Vagina (tissue), 2 donors: ENCODE measurements at regions of chr3 and their contacts with region 1.

Region 1: DNA sequence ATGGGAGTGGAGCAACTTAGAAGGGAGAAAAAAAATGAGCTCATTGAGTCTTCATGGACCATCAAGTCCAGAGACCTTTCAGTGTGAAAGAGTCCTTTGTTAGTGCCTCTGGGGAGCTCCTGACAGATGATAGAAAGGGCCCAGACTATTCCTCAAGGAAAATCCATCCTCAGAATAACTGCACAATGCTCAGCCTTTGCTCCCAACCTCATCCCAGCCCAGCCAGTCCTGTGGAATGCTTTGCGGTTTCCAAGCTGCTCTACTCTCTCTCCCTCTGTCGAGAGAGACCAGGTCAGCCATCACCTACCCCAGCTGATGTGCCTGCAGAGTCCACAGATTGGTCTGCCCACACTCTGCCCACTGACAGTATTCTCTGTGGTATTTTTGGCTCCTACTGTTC is 406.2 kb downstream of the MFSD1 start:
- DNase-seq: no peak
- H3K4me3 ChIP-seq: no peak overlapping the region
- H3K27ac ChIP-seq: no peak overlapping the region
- H3K4me1 ChIP-seq: no peaks in the 10 kb centered on the region
- H3K27me3 ChIP-seq: no peaks in the 10 kb centered on the region
- CTCF ChIP-seq: no peak
- POLR2A ChIP-seq: no peak

Region 2: GRCh38 chr3:159150180-159150579 is 57.9 kb before region 1 on chr3:
- intact Hi-C with region 1: no loop called
- DNase-seq: no peak
- H3K4me3 ChIP-seq: no peak overlapping the region
- H3K27ac ChIP-seq: no peak overlapping the region
- H3K4me1 ChIP-seq: no peaks in the 10 kb centered on the region
- H3K27me3 ChIP-seq: no peaks in the 10 kb centered on the region
- CTCF ChIP-seq: no peak
- POLR2A ChIP-seq: no peak

Region 3: DNA sequence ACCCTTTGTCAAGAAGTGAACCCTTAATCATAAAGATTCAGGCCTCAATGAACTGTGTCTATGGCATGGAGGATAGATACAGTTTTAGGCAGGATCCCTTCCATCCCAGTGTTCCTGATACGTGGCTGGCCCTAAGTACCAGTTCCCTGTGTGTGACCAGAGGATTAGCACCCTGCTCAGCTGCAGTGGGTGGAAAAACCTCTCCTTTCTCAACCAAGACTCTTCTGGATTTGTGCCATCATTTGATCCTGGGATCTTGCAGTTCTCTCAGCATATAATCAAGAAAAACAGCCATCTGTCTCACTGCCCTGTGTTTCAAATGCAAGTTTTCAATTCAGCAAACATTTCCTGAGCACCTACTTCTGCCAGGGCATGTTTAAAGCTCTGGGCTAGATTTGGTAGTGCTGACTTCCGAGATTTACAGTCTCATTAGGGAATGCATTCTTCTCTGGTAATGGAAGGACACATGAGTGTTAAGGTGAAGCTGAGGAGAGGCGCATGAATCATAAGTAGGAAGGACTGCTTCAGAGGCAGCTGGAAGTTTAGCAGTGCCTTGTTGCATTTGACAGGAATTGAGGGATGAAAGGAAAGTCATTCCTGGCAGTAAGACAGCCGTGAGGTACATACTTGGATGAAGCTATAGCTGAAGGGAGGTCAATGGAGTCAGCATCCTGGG is 17.9 kb before region 1 on chr3:
- intact Hi-C with region 1: loop called (anchors 2 kb)
- DNase-seq: no peak
- H3K4me3 ChIP-seq: no peak overlapping the region
- H3K27ac ChIP-seq: no peak overlapping the region
- H3K4me1 ChIP-seq: peaks cover 28% of the 10 kb centered on the region
- H3K27me3 ChIP-seq: no peaks in the 10 kb centered on the region
- CTCF ChIP-seq: no peak
- POLR2A ChIP-seq: no peak